ENCODE measurements at regions of chr17 and their contacts with region 1.

Region 1: GRCh38 chr17:35747540-35748017 is 5.5 kb downstream of the GAS2L2 start:
- DNase-seq: peak; percentile 65 to 93 (median 83)
- H3K4me3 ChIP-seq: no peak overlapping the region
- H3K27ac ChIP-seq: no peak overlapping the region
- H3K4me1 ChIP-seq: no peaks in the 10 kb centered on the region
- H3K27me3 ChIP-seq: peaks cover 27% of the 10 kb centered on the region
- CTCF ChIP-seq: peak; percentile 87 to 97 (median 92)
- POLR2A ChIP-seq: no peak

Region 2: GRCh38 chr17:35161281-35161761 is 586.3 kb before region 1 on chr17:
- intact Hi-C with region 1: loop called in 1 of 2 experiments (anchors 10 kb)
- DNase-seq: no peak
- H3K4me3 ChIP-seq: no peak overlapping the region
- H3K27ac ChIP-seq: no peak overlapping the region
- H3K4me1 ChIP-seq: no peaks in the 10 kb centered on the region
- H3K27me3 ChIP-seq: peaks cover 7% of the 10 kb centered on the region
- CTCF ChIP-seq: no peak
- POLR2A ChIP-seq: no peak

Region 3: DNA sequence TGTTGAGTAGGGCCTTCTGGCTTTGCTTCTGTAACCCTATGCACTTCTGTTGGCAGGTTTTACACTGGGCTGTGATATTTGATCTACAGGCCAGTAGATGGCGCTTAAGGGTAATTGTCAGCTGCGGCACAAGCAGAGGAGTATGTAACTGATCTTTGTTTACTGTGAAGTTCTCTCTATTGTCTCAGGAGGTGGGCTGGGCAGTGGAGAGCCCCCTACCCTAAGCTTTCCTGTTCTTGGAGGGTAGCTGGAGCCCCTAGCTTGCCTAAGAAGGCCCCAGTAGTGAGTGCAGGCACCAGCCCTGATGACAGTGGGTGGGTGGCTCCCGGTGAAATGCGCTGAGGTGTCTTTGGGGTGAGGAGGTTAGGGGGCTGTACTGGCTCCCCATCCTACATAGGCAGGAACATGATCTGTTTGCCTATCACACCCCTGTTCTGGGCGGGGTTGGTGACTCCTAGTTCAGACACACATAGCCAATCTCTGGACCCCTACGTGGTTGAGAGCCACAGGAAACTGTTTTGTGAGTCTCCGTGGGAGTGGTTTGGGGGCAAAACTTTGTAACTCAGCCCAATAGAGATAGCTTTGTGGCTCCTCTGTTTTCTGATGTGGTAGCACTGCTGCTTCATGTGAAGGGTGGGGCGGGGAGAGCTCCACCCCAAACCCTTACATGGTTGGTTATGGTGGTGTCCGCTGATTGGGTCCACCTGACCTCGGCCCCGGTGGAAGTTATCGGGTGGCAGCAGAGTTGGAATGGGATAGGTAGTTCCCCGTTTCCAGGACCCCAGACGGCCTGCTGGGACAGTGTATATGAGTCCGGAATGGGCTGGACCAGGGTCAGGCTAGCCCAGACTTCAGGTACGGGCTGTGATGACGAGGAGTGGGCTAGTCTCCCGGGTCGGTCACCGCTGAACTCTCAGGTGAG is 434.5 kb before region 1 on chr17:
- intact Hi-C with region 1: loop called in 1 of 2 experiments (anchors 5 kb)
- DNase-seq: peak; percentile 41 to 74 (median 53)
- H3K4me3 ChIP-seq: peak overlapping the region in 2 of 4 donors; percentile 22 to 44
- H3K27ac ChIP-seq: peak overlapping the region in 1 of 5 donors; percentile 1
- H3K4me1 ChIP-seq: peaks cover 0 to 6% of the 10 kb centered on the region in 2 donors
- H3K27me3 ChIP-seq: no peaks in the 10 kb centered on the region
- CTCF ChIP-seq: peak; percentile 50 to 83 (median 75)
- POLR2A ChIP-seq: no peak

Region 4: GRCh38 chr17:35387496-35387895 is 360.1 kb before region 1 on chr17:
- intact Hi-C with region 1: no loop called
- DNase-seq: no peak
- H3K4me3 ChIP-seq: no peak overlapping the region
- H3K27ac ChIP-seq: no peak overlapping the region
- H3K4me1 ChIP-seq: no peaks in the 10 kb centered on the region
- H3K27me3 ChIP-seq: no peaks in the 10 kb centered on the region
- CTCF ChIP-seq: no peak
- POLR2A ChIP-seq: no peak

Region 5: DNA sequence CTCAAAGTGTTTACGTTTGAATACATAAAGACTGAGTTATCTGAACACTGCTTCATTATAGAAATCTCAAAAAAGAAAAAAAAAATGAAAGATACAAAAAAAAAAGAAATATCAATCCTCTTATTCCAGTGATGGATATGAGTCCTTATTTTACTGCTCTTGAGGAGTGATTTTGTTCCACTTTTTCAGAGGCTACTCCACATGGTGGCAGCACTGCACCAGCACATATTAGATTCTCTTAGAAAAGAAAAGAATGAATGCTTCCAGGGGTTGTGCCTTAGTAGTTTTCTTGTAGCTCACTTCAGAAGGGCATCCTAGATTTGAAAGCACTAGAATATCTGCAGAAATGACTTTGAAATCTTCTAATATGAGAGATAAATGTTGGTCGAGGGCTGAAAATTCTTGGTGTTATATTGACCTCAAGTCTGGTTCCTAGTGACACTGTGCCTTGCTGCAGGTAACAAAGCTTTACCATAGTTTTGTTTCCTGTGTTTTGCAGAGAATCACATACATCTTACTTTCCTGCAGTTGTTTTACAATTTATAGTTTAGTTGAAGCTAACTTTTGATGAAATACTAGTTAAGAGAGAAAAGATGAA is 134.6 kb before region 1 on chr17:
- intact Hi-C with region 1: loop called (anchors 2 to 5 kb)
- DNase-seq: peak; percentile 37 to 84 (median 51)
- H3K4me3 ChIP-seq: no peak overlapping the region
- H3K27ac ChIP-seq: no peak overlapping the region
- H3K4me1 ChIP-seq: peaks cover 8 to 9% of the 10 kb centered on the region in 2 donors
- H3K27me3 ChIP-seq: no peaks in the 10 kb centered on the region
- CTCF ChIP-seq: peak; percentile 47 to 72 (median 64)
- POLR2A ChIP-seq: no peak